Colonic mucosa (tissue), 4 donors: ENCODE measurements at regions of chr11 and their contacts with region 1.

Region 1: DNA sequence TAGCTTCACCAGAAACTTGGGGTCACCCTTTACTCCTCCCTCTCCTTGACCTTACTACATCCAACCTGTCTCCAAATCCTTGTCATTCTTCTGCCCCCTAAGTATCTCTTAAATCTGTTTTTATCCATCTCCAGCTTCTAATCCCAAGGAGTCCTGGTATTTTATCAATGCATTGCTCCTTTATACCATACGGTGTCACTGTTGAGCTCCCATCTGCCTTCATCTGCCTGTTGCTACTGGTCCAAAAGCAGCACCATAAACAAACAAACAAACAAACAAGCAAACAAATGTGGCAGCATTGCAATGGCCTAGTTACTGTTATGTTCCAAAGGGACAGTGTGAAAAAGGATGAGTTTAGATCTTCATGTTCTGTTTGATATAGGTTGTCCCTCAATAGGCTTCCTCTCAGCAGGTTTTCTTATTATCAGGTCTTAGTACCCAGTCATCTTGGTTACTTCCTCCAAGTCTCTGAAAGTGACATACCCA is 34.2 kb downstream of the DNHD1 start:
- DNase-seq: no peak
- H3K4me3 ChIP-seq: no peak overlapping the region
- H3K27ac ChIP-seq: no peak overlapping the region
- H3K4me1 ChIP-seq: no peaks in the 10 kb centered on the region
- H3K27me3 ChIP-seq: no peaks in the 10 kb centered on the region
- CTCF ChIP-seq: peak; percentile 67

Region 2: GRCh38 chr11:6705905-6706535 is 174.7 kb after region 1 on chr11:
- intact Hi-C with region 1: loop called (anchors 2 kb)
- DNase-seq: peak; percentile 47
- H3K4me3 ChIP-seq: no peak overlapping the region
- H3K27ac ChIP-seq: no peak overlapping the region
- H3K4me1 ChIP-seq: no peaks in the 10 kb centered on the region
- H3K27me3 ChIP-seq: no peaks in the 10 kb centered on the region
- CTCF ChIP-seq: peak; percentile 87